ENCODE measurements at regions of chr10 and their contacts with region 1.

Region 1: DNA sequence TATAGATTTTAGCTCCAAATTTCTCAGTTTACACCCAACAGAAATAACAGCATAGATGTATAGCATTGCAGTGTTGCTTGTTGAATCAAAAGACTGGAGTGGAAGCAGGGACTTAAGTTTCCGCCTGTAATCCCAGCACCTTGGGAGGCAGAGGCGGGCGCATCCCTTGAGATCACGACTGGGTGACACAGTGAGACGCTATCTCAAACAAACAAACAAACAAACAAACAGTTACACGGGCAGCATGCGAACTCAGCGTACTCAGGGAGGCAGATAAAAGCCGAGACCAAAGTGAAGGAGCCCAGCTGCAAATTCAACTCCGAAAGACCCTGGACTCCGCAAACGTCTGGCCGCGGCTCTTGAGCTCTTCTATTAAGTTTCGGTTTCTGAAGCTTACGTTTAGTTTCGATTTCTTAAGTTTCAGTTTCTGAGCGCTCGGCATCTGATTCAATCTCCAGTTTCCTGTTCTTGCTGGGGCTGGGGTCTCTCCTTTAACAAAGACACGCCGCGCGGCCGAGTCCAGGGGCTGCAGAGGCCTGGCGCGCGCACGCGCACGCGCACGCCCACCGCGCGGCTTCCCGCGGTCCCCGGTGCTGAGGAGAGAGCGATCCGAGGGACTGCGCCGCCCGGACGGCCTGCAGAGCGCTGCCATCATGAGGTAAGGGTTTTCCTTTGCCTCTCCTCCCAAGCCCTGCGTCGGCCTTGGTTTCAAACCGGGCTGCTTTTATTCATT is at the start of gene IFIT5:
- DNase-seq: peak; percentile 64
- H3K4me3 Mint-ChIP-seq: peak within 1 kb of the TSS; percentile 85
- H3K27ac Mint-ChIP-seq: peak within 1 kb of the TSS; percentile 96
- H3K4me1 Mint-ChIP-seq: peaks cover 45% of the 10 kb centered on the region
- H3K27me3 Mint-ChIP-seq: no peaks in the 10 kb centered on the region
- total RNA-seq, gene IFIT5: 7.0 to 7.2 TPM

Region 2: DNA sequence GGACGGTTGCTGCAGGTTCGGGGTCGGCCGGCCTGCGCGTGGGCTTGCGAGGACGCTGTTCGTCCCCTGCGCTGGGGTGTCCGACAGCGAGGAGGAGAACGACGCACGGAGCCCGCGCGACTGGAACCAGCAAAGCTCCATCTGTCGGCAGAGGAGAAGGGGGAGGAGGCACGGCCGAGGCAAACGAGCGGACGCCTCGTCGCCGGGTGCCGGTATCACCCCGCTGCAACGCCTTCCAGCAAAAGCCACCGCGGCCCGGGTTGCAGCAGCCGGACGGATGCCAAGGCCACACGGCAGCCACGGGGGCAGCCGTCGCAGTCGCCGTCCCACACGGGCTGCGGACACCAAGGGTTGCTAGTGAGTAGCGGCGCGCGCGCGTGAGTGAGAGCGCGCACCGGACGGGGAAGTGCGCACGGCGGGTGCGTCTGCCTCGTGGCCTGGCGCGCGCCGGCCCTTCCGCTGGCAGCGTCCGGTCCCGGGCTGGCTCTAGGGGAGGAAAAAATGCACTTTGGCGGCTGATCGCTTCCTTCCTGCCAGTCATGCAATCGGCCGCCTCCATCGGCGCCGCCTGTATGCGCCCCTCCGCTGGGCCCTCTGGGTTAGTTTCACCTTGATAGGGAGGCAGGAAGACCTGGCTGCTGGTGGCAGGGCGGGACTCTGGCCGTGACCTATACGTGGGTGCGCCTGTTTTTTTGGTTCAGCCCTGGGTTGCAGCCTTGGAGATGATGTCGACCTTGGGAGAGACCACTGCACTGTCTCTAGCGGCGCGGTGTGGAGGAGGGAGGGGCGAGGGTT is 533.8 kb before region 1 on chr10:
- CTCF ChIA-PET with region 1: no interaction called
- intact Hi-C with region 1: loop called (anchors 10 kb)
- DNase-seq: peak; percentile 82
- H3K4me3 Mint-ChIP-seq: peak overlapping the region; percentile 95
- H3K27ac Mint-ChIP-seq: peak overlapping the region; percentile 97
- H3K4me1 Mint-ChIP-seq: peaks cover 58% of the 10 kb centered on the region
- H3K27me3 Mint-ChIP-seq: no peaks in the 10 kb centered on the region

Region 3: DNA sequence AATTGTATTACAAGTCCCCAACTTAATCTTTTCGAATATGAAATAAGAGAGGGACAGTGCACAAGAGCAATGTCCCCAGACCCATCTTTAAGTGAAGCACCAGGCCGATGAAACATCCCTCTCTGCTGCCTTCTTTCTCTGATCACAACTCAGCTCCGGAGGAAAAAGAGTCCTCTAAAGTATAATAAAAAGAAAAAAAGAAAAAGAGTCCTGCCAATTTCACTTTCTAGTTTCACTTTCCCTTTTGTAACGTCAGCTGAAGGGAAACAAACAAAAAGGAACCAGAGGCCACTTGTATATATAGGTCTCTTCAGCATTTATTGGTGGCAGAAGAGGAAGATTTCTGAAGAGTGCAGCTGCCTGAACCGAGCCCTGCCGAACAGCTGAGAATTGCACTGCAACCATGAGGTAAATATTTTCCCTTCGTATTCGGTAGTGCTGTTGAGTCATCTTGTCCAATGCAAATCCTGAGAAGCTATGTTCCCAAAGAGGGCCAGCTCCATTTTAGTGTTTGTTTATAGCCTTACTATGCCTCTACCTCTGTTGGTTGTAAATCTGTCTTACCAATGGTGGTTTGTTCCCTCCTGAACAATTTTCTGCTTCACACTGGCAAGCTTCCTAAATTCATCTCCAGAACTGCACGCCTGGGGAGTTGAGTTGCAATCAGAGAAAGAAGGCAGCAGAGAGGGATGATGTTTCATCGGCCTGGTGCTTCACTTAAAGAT is 112.4 kb before region 1 on chr10 and contains the start of gene IFIT2:
- CTCF ChIA-PET with region 1: no interaction called
- intact Hi-C with region 1: loop called (anchors 2 kb)
- DNase-seq: peak; percentile 22
- H3K4me3 Mint-ChIP-seq: peak within 1 kb of the TSS; percentile 79
- H3K27ac Mint-ChIP-seq: peak within 1 kb of the TSS; percentile 65
- H3K4me1 Mint-ChIP-seq: peaks cover 32% of the 10 kb centered on the region
- H3K27me3 Mint-ChIP-seq: no peaks in the 10 kb centered on the region
- total RNA-seq, gene IFIT2: 35.7 to 39.4 TPM

Region 4: GRCh38 chr10:89391917-89392756 is 22.2 kb before region 1 on chr10 and contains the start of gene IFIT1:
- CTCF ChIA-PET with region 1: interaction called, 4 read pairs
- intact Hi-C with region 1: loop called (anchors 1 kb)
- DNase-seq: peak; percentile 52
- H3K4me3 Mint-ChIP-seq: peak within 1 kb of the TSS; percentile 73
- H3K27ac Mint-ChIP-seq: peak within 1 kb of the TSS; percentile 70
- H3K4me1 Mint-ChIP-seq: peaks cover 30% of the 10 kb centered on the region
- H3K27me3 Mint-ChIP-seq: no peaks in the 10 kb centered on the region
- total RNA-seq, gene IFIT1: 5.9 to 6.0 TPM